Psoas muscle (tissue), 8 donors: ENCODE measurements at regions of chr13 and their contacts with region 1.

Region 1: GRCh38 chr13:73531014-73531413 is 472.2 kb downstream of the KLF5 start:
- DNase-seq: peak in 1 of 2 donors; percentile 58
- ATAC-seq: peak in 2 of 4 donors; percentile 95 to 96
- H3K4me3 ChIP-seq: no peak overlapping the region
- H3K27ac ChIP-seq: no peak overlapping the region
- H3K4me1 ChIP-seq: no peaks in the 10 kb centered on the region
- H3K27me3 ChIP-seq: no peaks in the 10 kb centered on the region
- CTCF ChIP-seq: no peak

Region 2: GRCh38 chr13:73111331-73111730 is 419.7 kb before region 1 on chr13:
- intact Hi-C with region 1: no loop called
- DNase-seq: no peak
- ATAC-seq: no peak
- H3K4me3 ChIP-seq: no peak overlapping the region
- H3K27ac ChIP-seq: no peak overlapping the region
- H3K4me1 ChIP-seq: no peaks in the 10 kb centered on the region
- H3K27me3 ChIP-seq: no peaks in the 10 kb centered on the region
- CTCF ChIP-seq: no peak

Region 3: GRCh38 chr13:73481886-73482445 is 49.0 kb before region 1 on chr13:
- intact Hi-C with region 1: loop called in 1 of 2 experiments (anchors 5 kb)
- DNase-seq: peak in 1 of 2 donors; percentile 56
- ATAC-seq: peak in 3 of 4 donors; percentile 83 to 92 (median 92)
- H3K4me3 ChIP-seq: no peak overlapping the region
- H3K27ac ChIP-seq: no peak overlapping the region
- H3K4me1 ChIP-seq: peaks cover 30% of the 10 kb centered on the region
- H3K27me3 ChIP-seq: no peaks in the 10 kb centered on the region
- CTCF ChIP-seq: no peak